ENCODE measurements at regions of chr10 and their contacts with region 1.

Region 1: DNA sequence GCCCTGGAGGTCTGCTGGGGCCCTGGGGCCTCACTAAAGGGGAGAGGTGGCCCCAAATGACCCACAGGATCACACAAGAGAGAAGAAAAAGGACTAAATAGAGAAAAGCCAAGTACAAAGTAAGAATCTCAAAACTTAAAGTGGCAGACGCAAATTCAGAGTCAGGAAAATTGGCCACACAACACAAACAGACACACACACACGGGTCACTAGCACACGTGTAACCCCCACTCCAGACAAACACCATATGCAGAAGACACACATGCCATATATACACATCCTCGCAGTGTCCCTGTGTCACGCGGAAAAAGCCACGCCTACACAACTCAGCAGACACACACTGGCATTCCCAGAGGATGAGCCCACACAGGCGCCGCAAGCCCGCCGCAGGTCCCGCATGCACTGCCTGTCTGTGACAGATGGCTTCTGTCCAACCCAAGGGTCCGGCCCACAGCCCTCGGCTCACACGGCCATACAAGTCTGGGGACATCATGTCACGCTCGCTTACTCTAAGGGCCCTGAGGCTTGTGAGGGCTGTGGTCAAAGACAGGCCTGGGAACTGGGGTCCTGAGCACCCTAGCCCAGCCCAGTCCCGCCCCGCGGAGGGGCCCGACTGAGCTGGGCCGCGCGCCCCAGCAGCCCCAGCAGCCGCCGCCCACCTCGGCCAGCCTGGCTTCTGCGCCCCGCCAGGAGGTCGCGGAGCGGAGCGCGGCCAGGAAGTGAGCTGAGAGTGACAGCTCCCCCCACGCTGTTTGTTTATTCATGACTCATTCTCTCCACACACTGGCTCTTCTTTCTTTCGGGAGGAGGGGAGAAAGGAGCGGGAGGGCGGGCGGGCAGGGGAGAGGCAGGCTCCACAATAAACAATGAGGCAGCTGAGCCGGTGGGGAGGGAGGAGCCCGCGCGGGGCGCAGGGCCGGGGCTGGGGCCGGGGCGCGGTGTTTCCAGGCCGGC is 95.5 kb upstream of the ZMIZ1 start:
- DNase-seq: peak; percentile 91
- H3K4me3 ChIP-seq: peak overlapping the region in 2 of 3 experiments; percentile 11 to 15
- H3K27ac ChIP-seq: peak overlapping the region; percentile 98
- H3K4me1 ChIP-seq: peaks cover 32% of the 10 kb centered on the region
- H3K27me3 ChIP-seq: no peaks in the 10 kb centered on the region
- CTCF ChIP-seq: no peak
- POLR2A ChIP-seq: peak; percentile 55

Region 2: DNA sequence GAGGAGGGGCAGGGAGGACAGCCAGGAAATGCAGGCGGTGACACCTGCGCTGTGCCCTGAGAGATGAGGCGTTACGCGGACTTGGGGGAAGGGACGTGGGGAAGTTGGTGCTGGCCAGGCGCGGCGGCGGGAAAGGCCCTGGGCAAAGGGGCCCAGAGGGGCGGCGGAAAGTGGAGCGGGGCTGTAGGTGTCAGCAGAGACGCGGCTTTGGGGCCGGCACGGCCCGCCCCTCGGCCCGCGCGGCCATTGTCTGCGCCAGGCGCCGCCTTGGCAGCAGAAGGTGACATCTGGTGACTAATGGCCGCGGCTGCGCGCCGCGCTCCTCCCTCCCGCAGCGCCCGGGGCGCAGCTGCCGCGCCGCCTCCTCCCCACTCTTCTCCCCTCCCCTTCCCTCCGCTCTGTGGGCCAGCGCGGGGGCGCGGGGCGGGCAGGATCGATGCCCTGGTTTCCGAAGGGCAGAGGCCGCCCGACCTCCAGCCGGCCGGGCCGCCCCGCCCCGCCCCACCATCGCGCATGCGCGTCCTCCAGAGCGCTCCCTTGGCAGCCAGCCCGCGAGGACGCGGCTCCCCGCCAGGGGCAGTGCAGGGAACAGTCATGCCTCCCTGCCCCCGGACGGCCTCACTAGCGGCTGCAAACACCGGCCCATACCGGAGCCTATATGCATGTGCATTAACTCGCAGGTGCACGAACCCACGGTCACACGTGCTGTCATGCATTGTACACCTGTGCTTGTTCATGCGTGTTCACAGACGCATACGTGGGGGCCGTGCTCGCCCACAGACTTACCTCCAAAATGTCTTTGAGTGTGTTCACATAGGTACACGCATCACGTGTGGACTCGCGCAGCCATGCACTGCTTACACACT is 670.0 kb before region 1 on chr10:
- CTCF ChIA-PET with region 1: interaction called, 3 read pairs
- POLR2A ChIA-PET with region 1: no interaction called
- dilution Hi-C with region 1: no loop called
- intact Hi-C with region 1: loop called (anchors 1 kb)
- DNase-seq: peak; percentile 97
- H3K4me3 ChIP-seq: peak overlapping the region; percentile 31 to 59 (median 44)
- H3K27ac ChIP-seq: peak overlapping the region; percentile 76
- H3K4me1 ChIP-seq: peaks cover 7% of the 10 kb centered on the region
- H3K27me3 ChIP-seq: peaks cover 8 to 11% of the 10 kb centered on the region in 2 experiments
- CTCF ChIP-seq: peak; percentile 69 to 87
- POLR2A ChIP-seq: peak; percentile 67

Region 3: GRCh38 chr10:78700413-78700812 is 272.8 kb before region 1 on chr10:
- CTCF ChIA-PET with region 1: no interaction called
- POLR2A ChIA-PET with region 1: no interaction called
- dilution Hi-C with region 1: no loop called
- intact Hi-C with region 1: loop called (anchors 5 kb)
- DNase-seq: peak; percentile 72
- H3K4me3 ChIP-seq: no peak overlapping the region
- H3K27ac ChIP-seq: no peak overlapping the region
- H3K4me1 ChIP-seq: peaks cover 17% of the 10 kb centered on the region
- H3K27me3 ChIP-seq: no peaks in the 10 kb centered on the region
- CTCF ChIP-seq: no peak
- POLR2A ChIP-seq: no peak

Region 4: GRCh38 chr10:78931321-78932053 is 41.7 kb before region 1 on chr10:
- CTCF ChIA-PET with region 1: no interaction called
- POLR2A ChIA-PET with region 1: no interaction called
- dilution Hi-C with region 1: no loop called
- intact Hi-C with region 1: loop called (anchors 1 kb)
- DNase-seq: peak; percentile 52
- H3K4me3 ChIP-seq: no peak overlapping the region
- H3K27ac ChIP-seq: peak overlapping the region; percentile 17
- H3K4me1 ChIP-seq: peaks cover 17% of the 10 kb centered on the region
- H3K27me3 ChIP-seq: no peaks in the 10 kb centered on the region
- CTCF ChIP-seq: no peak
- POLR2A ChIP-seq: no peak

Region 5: GRCh38 chr10:78960316-78960800 is 12.9 kb before region 1 on chr10:
- CTCF ChIA-PET with region 1: interaction called, 36 read pairs
- POLR2A ChIA-PET with region 1: interaction called, 9 read pairs
- dilution Hi-C with region 1: no loop called
- intact Hi-C with region 1: loop called (anchors 1 kb)
- DNase-seq: peak; percentile 73
- H3K4me3 ChIP-seq: no peak overlapping the region
- H3K27ac ChIP-seq: no peak overlapping the region
- H3K4me1 ChIP-seq: peaks cover 23% of the 10 kb centered on the region
- H3K27me3 ChIP-seq: no peaks in the 10 kb centered on the region
- CTCF ChIP-seq: no peak
- POLR2A ChIP-seq: no peak

Region 6: DNA sequence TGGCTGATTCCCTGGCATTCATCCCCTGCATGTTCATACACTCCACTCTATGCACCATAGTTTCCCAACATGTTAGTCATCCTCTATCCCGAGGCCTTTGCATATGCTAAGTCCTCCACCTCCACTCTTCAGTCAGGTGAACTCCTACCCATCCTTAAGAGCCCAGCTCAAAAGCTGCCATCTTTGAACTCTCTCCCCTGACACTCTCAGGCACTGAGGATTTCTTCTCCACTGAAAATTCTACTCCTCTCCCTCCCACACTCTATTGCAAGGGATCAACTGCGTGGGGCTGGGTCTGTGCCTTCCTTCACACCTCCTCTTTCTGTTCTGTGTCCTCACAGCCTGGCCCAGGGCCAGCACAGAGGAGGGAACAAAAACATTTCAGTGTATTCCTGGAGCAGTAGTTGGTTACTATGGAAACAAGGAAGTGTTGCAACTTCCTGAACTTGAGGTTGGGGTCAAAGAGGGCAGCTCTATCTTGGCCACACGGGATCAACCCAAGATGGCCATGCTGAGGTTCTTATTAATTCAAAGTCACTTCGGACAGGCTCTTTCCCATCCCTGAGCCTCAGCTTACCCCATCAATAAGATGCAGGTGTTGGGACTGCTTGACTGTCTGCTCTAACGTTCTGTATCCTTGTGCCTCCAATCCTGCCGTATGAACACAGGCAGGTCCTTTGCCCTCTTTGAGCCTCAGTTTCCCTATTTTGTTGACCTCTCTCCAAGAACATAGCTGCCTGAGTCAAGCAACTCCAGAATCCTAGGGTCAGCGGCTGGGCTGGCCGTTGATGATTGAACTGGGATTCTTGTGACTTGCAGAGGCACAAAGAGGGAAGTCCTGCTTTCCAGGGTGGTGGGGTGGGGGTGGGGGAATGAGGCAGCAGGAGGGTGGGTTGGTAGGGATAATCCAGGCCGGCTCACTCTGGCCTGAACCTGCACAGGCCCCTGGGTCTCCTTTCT is 111.1 kb after region 1 on chr10:
- CTCF ChIA-PET with region 1: interaction called, 3 read pairs
- POLR2A ChIA-PET with region 1: no interaction called
- dilution Hi-C with region 1: no loop called
- intact Hi-C with region 1: loop called (anchors 1 kb)
- DNase-seq: peak; percentile 95
- H3K4me3 ChIP-seq: no peak overlapping the region
- H3K27ac ChIP-seq: peak overlapping the region; percentile 64
- H3K4me1 ChIP-seq: peaks cover 27% of the 10 kb centered on the region
- H3K27me3 ChIP-seq: no peaks in the 10 kb centered on the region
- CTCF ChIP-seq: no peak
- POLR2A ChIP-seq: peak; percentile 20

Region 7: GRCh38 chr10:79137826-79138225 is 164.6 kb after region 1 on chr10:
- CTCF ChIA-PET with region 1: no interaction called
- POLR2A ChIA-PET with region 1: no interaction called
- dilution Hi-C with region 1: no loop called
- intact Hi-C with region 1: no loop called
- DNase-seq: no peak
- H3K4me3 ChIP-seq: no peak overlapping the region
- H3K27ac ChIP-seq: no peak overlapping the region
- H3K4me1 ChIP-seq: peaks cover 30% of the 10 kb centered on the region
- H3K27me3 ChIP-seq: no peaks in the 10 kb centered on the region
- CTCF ChIP-seq: no peak
- POLR2A ChIP-seq: no peak

Region 8: GRCh38 chr10:79178614-79179163 is 205.5 kb after region 1 on chr10:
- CTCF ChIA-PET with region 1: no interaction called
- POLR2A ChIA-PET with region 1: no interaction called
- dilution Hi-C with region 1: no loop called
- intact Hi-C with region 1: loop called (anchors 2 kb)
- DNase-seq: peak; percentile 93
- H3K4me3 ChIP-seq: no peak overlapping the region
- H3K27ac ChIP-seq: peak overlapping the region; percentile 64
- H3K4me1 ChIP-seq: peaks cover 57% of the 10 kb centered on the region
- H3K27me3 ChIP-seq: no peaks in the 10 kb centered on the region
- CTCF ChIP-seq: no peak
- POLR2A ChIP-seq: no peak